Activated naive CD4-positive, alpha-beta T cell treated with anti-CD3 and anti-CD28 coated beads for 36 hours (primary cell): ENCODE measurements at regions of chr17 and their contacts with region 1.

Region 1: GRCh38 chr17:1365445-1366039 is 34.5 kb downstream of the YWHAE start:
- DNase-seq: peak; percentile 73
- H3K4me3 Mint-ChIP-seq: peak overlapping the region; percentile 19
- H3K27ac Mint-ChIP-seq: no peak overlapping the region
- H3K4me1 Mint-ChIP-seq: peaks cover 66% of the 10 kb centered on the region
- H3K27me3 Mint-ChIP-seq: no peaks in the 10 kb centered on the region

Region 2: DNA sequence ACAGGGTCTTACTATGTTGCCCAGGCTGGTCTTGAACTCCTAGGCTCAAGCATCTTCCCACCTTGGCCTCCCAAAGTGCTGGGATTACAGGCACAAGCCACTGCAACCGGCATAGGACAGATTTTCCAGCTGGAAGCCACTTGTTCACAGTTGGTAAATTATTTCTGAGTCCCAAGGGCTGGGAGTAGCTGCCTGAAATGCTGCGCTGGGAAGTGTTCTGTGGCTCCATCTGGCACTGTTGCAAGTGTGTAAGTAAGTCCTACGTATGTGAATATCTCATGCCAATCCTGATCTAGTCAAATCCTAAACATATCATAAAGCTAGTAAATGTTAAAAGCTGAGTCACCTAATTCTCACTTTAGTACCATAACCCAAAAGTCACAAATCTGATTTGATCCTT is 13.6 kb before region 1 on chr17:
- CTCF ChIA-PET with region 1: interaction called, 13 read pairs
- intact Hi-C with region 1: no loop called
- DNase-seq: no peak
- H3K4me3 Mint-ChIP-seq: no peak overlapping the region
- H3K27ac Mint-ChIP-seq: no peak overlapping the region
- H3K4me1 Mint-ChIP-seq: peaks cover 16% of the 10 kb centered on the region
- H3K27me3 Mint-ChIP-seq: no peaks in the 10 kb centered on the region

Region 3: DNA sequence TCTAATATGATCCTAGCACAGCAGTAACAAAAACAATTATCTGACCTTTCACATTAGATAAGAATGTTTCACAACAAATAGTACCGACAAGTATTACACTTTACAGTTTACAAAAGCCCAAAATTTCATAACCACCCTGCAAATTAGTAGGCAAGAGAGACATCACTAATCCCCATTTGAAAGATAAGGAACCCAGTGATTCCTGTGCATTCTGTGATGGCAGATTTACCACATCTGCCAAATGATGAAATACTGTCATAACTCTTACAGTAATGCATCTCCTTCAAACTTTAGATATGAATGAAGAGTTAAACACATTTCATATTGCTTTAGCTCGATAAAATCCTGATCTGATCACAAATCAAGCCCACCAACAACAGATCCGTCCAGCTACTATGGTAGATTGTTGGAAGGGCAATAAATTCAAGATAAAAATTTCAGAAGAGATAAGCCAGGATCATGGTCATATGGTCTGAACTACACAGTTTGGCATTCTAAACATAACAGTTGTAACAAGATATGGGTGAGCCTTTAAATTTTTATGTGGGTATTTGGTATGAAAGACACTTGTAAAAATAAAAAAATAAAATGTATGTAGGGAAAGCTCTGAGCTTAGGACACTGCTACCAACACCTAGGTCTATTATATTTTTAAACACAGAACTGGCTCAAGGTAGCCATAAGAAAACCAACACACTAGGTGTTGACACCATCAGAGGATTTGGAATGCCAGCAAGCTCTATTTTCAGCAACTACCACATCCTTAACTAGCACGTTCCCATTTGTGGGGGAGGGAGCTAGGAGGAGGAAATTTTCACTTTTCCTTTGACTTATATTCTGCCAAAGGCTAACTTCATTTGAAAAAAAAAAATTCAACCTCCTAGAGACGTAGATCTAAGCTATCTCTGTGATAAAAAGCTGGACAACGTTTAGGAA is 25.2 kb after region 1 on chr17:
- CTCF ChIA-PET with region 1: interaction called, 23 read pairs
- intact Hi-C with region 1: no loop called
- DNase-seq: no peak
- H3K4me3 Mint-ChIP-seq: no peak overlapping the region
- H3K27ac Mint-ChIP-seq: peak overlapping the region; percentile 61
- H3K4me1 Mint-ChIP-seq: peaks cover 79% of the 10 kb centered on the region
- H3K27me3 Mint-ChIP-seq: no peaks in the 10 kb centered on the region

Region 4: GRCh38 chr17:1455797-1456599 is 90.5 kb after region 1 on chr17 and contains the start of gene CRK:
- CTCF ChIA-PET with region 1: interaction called, 9 read pairs
- intact Hi-C with region 1: loop called (anchors 1 kb)
- DNase-seq: peak; percentile 98
- H3K4me3 Mint-ChIP-seq: peak within 1 kb of the TSS; percentile 86
- H3K27ac Mint-ChIP-seq: peak within 1 kb of the TSS; percentile 81
- H3K4me1 Mint-ChIP-seq: peaks cover 57% of the 10 kb centered on the region
- H3K27me3 Mint-ChIP-seq: peaks cover under 1% of the 10 kb centered on the region
- total RNA-seq, gene CRK: 10.6 to 14.1 TPM

Region 5: GRCh38 chr17:1516388-1517161 is 151.0 kb after region 1 on chr17 and contains the start of gene INPP5K:
- CTCF ChIA-PET with region 1: interaction called, 12 read pairs
- intact Hi-C with region 1: loop called (anchors 1 kb)
- DNase-seq: peak; percentile 98
- H3K4me3 Mint-ChIP-seq: peak within 1 kb of the TSS; percentile 80
- H3K27ac Mint-ChIP-seq: peak within 1 kb of the TSS; percentile 54
- H3K4me1 Mint-ChIP-seq: peaks cover 26% of the 10 kb centered on the region
- H3K27me3 Mint-ChIP-seq: no peaks in the 10 kb centered on the region
- total RNA-seq, gene INPP5K: 17.1 to 18.2 TPM

Region 6: DNA sequence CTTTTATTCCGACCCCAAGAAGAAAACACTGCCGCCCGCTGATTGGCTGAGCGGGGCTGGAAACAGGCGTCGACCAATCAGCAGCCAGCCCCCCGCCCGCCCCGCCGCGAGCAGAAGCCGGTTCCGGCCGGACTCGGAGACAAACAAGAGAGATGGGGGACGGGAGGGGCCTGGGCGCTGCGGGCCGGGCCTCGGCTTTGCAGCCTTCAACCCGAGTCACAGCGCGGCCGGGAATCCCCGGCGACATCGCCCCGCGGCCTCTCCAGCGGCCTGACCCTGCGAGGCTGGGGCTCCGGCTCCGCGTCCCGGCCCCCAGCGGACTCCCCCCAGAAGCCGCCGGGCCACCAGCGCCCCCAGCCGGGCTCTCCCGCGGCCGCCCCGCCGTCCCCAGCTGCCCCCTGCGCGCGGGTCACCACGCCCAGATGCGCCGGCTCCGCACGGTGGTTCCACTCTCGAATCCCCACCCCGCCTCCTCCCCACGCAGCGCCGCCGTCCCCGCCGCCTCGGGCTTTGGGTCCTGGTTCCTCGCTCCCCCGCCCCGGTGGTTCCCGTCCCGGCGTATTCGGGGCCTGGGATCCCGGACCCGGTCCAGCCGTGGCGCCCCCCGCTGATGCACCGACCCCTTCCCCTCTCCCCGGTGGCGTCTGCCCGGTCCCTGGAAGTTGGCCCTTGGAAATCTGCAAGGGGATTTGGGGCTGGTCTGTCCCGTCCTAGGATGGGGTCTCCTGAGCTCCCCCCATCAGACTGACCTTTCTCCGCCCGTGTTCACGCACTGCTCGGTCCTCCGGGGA is 263.5 kb after region 1 on chr17:
- CTCF ChIA-PET with region 1: no interaction called
- intact Hi-C with region 1: loop called (anchors 5 kb)
- DNase-seq: peak; percentile 86
- H3K4me3 Mint-ChIP-seq: peak overlapping the region; percentile 83
- H3K27ac Mint-ChIP-seq: no peak overlapping the region
- H3K4me1 Mint-ChIP-seq: peaks cover 18% of the 10 kb centered on the region
- H3K27me3 Mint-ChIP-seq: peaks cover 15% of the 10 kb centered on the region